Common myeloid progenitor, CD34-positive (primary cell): ENCODE measurements at regions of chr15 and their contacts with region 1.

Region 1: GRCh38 chr15:32659340-32660155 is 18.0 kb downstream of the SCG5 start:
- DNase-seq: no peak
- H3K4me3 ChIP-seq: no peak overlapping the region
- H3K27ac ChIP-seq: no peak overlapping the region
- H3K4me1 ChIP-seq: peaks cover 4 to 13% (median 9%) of the 10 kb centered on the region in 4 experiments
- H3K27me3 ChIP-seq: no peaks in the 10 kb centered on the region

Region 2: GRCh38 chr15:32794973-32795372 is 135.4 kb after region 1 on chr15:
- CTCF ChIA-PET with region 1: no interaction called
- POLR2A ChIA-PET with region 1: no interaction called
- DNase-seq: no peak
- H3K4me3 ChIP-seq: no peak overlapping the region
- H3K27ac ChIP-seq: no peak overlapping the region
- H3K4me1 ChIP-seq: peaks cover 3 to 11% (median 5%) of the 10 kb centered on the region in 4 experiments
- H3K27me3 ChIP-seq: peaks cover 0 to 23% (median 6%) of the 10 kb centered on the region in 5 experiments

Region 3: GRCh38 chr15:32956006-32956405 is 296.5 kb after region 1 on chr15:
- CTCF ChIA-PET with region 1: interaction called, 77 read pairs
- POLR2A ChIA-PET with region 1: no interaction called
- DNase-seq: peak; percentile 36 to 51 (median 48)
- H3K4me3 ChIP-seq: no peak overlapping the region
- H3K27ac ChIP-seq: no peak overlapping the region
- H3K4me1 ChIP-seq: peaks cover 0 to 4% (median 0%) of the 10 kb centered on the region in 4 experiments
- H3K27me3 ChIP-seq: no peaks in the 10 kb centered on the region

Region 4: DNA sequence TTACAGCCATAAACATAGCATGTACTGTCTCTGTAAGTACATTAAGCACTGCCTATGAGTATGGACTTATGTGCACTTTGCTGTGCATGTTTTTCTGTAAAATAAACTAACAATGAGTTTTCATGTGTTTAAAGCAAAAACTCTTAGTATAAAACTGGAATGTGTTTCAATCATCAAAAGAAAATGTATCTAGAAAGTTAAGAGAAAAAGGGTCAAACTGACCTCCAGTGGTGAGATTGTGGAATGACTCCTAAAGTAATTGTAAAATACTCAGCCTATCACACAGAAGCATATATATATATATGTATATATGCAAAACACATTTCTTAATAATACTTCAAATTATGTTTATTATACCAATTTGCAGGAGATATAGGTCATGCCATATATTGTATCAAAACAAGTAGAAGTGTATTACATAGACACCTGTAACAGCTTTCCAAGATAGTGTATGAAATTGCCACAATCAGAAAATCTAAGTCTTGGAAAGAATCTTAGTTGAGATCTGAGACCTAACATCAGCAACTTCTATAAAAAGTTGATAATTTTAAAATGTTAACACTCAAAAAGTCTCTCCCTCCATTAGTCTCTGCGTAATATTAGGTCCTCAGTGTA is 335.4 kb after region 1 on chr15:
- CTCF ChIA-PET with region 1: interaction called, 53 read pairs
- POLR2A ChIA-PET with region 1: no interaction called
- DNase-seq: peak; percentile 29 to 65 (median 58)
- H3K4me3 ChIP-seq: no peak overlapping the region
- H3K27ac ChIP-seq: no peak overlapping the region
- H3K4me1 ChIP-seq: no peaks in the 10 kb centered on the region
- H3K27me3 ChIP-seq: peaks cover 0 to 4% (median 0%) of the 10 kb centered on the region in 5 experiments